SK-N-SH (cell line): ENCODE measurements at regions of chr7 and their contacts with region 1.

Region 1: DNA sequence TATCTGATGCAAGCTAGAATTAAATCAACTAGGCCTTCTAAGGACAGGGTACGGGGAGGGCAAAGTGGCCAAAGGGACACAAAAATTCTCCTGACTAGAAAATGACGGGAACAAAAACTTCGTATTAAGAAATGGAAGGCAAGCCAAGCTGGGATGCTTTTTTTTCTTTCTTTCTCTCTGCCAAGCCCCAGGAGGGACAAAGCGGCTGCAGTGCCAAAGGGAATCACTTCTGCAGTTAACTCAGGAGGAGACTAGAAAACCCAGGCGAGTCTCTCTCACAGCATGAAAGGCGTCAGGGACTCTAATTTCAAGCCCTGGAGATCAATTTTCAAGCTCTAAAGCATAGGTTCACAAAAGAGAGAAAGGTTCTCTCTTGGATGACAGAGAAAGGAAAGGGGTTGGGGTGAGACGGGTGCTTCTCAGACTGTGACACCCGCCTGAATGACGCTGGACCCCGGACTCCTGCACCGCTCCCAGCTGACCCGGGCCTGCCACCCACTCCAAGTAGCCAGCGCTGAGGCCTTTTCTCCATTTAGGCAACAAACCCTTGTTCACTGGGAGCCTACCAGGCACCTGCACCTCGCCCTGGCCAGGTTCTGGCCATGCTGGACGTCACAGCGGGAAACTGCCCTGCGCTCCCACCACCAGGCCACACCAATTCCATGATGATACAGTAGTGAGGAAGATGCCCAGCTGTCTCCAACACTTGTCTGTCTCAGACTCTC is 56.5 kb downstream of the KIAA1549 start:
- DNase-seq: peak; percentile 58
- H3K4me3 ChIP-seq: no peak overlapping the region
- H3K27ac ChIP-seq: peak overlapping the region in 1 of 2 experiments; percentile 58; a peak in 2 of 4 replicates
- H3K4me1 ChIP-seq: peaks cover 5 to 17% of the 10 kb centered on the region in 2 experiments; a peak in 3 of 4 replicates
- H3K27me3 ChIP-seq: no peaks in the 10 kb centered on the region
- CTCF ChIP-seq: no peak
- EP300 ChIP-seq: 0 out of 4 replicates have a peak, but pooled peaks of 1 of the 2 experiments have one; percentile 14
- RAD21 ChIP-seq: no peak

Region 2: DNA sequence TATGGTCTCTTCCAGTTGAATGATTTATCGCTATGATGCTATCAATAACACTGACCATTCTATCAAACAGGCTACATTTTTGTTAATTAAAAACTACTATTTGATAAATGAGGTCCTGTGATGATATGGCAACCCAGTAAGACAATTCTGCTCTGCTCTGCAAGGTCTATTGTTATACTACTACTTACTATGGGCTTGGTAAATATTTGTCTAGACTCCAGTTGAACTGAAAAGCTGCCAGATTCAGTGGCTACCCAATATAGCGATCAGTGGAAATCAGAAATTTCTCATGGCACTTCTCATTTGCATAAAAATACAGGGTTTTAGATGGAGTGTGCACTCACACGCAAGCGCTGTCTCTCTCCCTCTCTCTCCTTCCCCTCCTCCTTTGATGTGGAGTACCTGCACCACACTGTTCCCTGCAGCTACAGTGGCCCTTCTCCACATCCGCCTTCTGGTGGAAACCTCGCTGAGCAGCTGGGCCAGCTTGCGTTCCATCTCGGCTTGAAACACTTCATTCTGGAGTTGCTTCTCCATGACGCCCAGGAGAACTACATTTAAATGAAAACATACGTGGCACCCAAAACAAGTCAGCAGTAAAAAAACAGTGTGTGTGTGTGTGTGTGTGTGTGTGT is 21.4 kb before region 1 on chr7:
- CTCF ChIA-PET with region 1: interaction called, 41 read pairs
- POLR2A ChIA-PET with region 1: no interaction called
- DNase-seq: no peak
- H3K4me3 ChIP-seq: no peak overlapping the region
- H3K27ac ChIP-seq: no peak overlapping the region
- H3K4me1 ChIP-seq: peaks cover 0 to 3% of the 10 kb centered on the region in 2 experiments; a peak in 1 of 4 replicates
- H3K27me3 ChIP-seq: no peaks in the 10 kb centered on the region
- CTCF ChIP-seq: no peak
- EP300 ChIP-seq: no peak
- RAD21 ChIP-seq: no peak

Region 3: GRCh38 chr7:138941545-138941944 is 16.9 kb after region 1 on chr7:
- CTCF ChIA-PET with region 1: no interaction called
- POLR2A ChIA-PET with region 1: no interaction called
- DNase-seq: no peak
- H3K4me3 ChIP-seq: no peak overlapping the region
- H3K27ac ChIP-seq: no peak overlapping the region
- H3K4me1 ChIP-seq: peaks cover 0 to 18% of the 10 kb centered on the region in 2 experiments; a peak in 2 of 4 replicates
- H3K27me3 ChIP-seq: no peaks in the 10 kb centered on the region
- CTCF ChIP-seq: no peak
- EP300 ChIP-seq: no peak
- RAD21 ChIP-seq: no peak

Region 4: DNA sequence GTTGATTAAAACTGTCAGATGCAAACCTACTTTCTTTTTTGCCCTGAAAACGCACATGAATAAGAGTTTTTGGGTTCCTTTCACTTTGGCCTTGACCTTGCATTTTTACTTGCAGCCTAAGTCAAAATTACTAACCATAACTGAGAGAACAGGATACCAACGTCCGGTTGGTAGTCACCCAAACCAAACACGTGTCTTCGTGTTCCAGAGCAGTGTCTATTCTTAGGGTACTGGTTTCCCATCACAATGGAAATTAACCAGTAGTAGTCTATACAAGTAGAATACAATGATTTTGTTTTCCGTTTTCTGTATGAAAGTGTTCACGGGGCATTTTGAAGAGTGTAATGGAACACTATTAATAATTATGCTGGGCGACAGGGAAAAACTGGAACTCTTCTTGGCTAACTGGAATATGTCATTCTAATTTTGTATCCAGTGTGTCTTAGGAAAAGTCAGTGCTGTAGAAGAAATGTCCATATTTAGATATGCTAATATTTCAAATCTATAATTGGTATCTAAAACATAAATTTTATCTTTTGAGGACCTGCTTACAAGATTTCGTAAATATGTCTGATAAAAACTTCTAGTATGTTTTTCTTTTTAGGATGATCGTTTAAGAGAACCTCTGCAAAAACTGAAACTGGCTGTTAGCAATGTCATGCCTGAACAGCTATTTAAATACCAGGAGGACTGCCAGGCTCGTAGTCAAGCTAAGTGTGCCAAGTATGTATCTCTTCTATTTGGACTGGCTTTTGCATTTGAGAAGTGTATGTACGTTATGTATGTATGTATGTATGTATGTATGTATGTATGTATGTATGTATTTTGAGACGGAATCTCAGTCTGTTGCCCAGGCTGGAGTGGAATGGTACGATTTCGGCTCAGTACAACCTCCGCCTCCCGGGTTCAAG is 347.3 kb after region 1 on chr7:
- CTCF ChIA-PET with region 1: no interaction called
- POLR2A ChIA-PET with region 1: no interaction called
- DNase-seq: no peak
- H3K4me3 ChIP-seq: no peak overlapping the region
- H3K27ac ChIP-seq: no peak overlapping the region
- H3K4me1 ChIP-seq: no peaks in the 10 kb centered on the region
- H3K27me3 ChIP-seq: no peaks in the 10 kb centered on the region
- CTCF ChIP-seq: no peak
- EP300 ChIP-seq: no peak
- RAD21 ChIP-seq: no peak